Activated naive CD4-positive, alpha-beta T cell treated with anti-CD3 and anti-CD28 coated beads for 36 hours (primary cell): ENCODE measurements at regions of chr7 and their contacts with region 1.

Region 1: DNA sequence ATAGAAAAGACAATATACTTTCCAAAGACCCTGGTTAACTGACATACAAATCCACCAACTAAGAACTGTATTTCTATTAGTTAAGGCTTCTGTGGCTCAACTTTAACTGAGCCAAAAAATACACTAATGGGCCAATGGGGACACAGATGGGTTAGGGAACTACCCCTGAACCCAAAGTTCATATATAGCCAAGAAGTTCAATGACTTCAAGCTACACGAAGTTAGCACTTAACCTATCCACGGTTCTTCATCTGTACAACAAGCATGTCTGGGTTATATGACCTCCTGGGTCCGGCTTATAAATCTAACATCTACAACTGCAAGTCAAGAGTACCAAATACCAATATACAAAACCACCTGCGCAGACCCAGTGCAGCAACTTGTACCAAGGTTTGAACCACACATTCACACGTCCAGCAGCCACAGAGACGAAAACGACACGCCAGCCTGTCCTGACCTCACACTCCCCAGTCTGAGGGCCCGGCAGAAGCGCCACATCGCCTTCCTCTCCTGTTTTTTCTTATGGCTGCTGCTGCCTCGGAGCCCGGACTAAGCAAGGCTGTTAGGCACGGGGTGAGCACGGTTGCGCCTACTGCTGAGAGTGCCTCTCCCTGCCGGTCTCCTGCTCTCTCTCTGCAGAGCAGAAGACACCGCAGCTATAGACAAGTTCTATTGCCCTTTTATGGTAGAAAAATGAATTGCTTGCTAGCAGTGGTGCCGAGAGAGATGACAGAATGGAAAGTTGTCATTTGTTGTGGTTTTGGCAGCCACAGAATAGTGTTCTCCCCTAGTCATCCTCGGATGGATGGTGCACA is 86.3 kb downstream of the RNF216 start:
- DNase-seq: peak; percentile 93
- H3K4me3 Mint-ChIP-seq: peak overlapping the region; percentile 88
- H3K27ac Mint-ChIP-seq: peak overlapping the region; percentile 96
- H3K4me1 Mint-ChIP-seq: peaks cover 97% of the 10 kb centered on the region
- H3K27me3 Mint-ChIP-seq: no peaks in the 10 kb centered on the region

Region 2: DNA sequence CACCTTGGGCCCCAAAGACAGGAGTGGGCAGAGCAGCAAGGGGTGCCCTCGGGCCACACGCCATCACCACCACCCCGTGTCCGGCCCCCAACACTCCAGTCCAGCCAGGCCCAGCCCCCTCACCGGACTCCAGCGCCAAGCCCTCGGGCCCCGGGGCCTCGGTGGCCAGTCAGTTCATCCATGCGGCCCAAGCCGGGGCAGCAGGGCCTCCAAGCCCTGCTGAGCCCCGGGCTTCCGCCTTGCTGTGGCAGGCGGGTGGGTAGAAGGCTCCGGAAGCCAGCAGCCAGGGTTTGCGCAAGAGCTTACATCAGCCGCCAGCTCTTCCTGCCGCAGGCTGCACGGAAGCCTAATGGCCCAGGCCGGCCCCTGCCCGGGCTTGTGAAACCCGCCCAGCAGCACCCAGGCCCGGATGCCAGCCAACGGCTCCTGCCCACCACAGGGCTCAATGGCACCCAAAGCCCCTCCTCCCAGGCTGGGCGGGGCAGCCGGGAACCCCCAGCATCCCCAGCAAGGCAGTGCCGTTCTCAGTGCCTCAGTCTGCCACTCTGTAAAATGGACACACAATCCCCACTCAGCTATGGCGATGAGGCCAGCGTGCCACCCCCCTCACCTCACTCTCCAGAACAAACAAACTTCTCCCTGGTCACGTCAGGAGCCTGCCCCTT is 298.0 kb before region 1 on chr7:
- CTCF ChIA-PET with region 1: no interaction called
- intact Hi-C with region 1: loop called (anchors 2 kb)
- DNase-seq: peak; percentile 92
- H3K4me3 Mint-ChIP-seq: peak overlapping the region; percentile 79
- H3K27ac Mint-ChIP-seq: peak overlapping the region; percentile 92
- H3K4me1 Mint-ChIP-seq: peaks cover 32% of the 10 kb centered on the region
- H3K27me3 Mint-ChIP-seq: no peaks in the 10 kb centered on the region

Region 3: GRCh38 chr7:5636914-5637313 is 58.2 kb before region 1 on chr7:
- CTCF ChIA-PET with region 1: no interaction called
- intact Hi-C with region 1: loop called (anchors 2 kb)
- DNase-seq: no peak
- H3K4me3 Mint-ChIP-seq: no peak overlapping the region
- H3K27ac Mint-ChIP-seq: no peak overlapping the region
- H3K4me1 Mint-ChIP-seq: peaks cover 8% of the 10 kb centered on the region
- H3K27me3 Mint-ChIP-seq: no peaks in the 10 kb centered on the region

Region 4: DNA sequence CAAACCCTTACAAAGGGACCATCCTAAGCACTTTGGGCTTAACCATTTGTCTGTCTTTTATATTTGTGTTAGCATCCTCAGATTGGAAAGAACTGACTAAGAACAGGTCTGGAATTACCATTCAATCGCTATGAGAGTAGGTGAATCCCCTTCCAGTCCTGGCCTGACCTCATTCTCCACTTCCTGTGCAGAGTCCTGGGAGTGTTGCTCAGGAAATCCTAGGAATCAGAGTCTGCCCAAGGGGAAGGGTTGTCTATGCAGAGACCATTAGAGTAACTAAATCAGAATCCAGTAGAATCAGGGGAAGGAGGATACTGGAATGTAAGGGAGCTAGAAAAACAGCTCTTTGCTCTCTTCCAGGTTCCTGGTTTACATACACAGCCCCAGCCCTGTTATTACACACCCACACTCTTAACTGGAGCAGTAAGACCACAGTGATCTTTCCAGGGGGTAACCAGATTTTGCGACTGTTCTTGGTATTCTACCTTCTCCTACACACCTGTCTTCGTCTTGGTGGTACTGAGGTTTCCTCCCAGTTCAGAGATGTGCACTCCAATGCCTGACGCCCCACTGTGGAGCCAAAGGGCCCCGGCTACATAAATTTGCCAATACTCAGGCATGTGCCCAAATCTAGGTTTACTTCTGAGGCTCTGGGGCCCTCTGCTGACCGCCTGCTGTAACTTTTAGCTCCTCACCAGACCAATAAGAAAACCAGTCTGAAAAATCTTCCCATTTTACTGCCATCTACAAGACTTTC is 17.4 kb before region 1 on chr7:
- CTCF ChIA-PET with region 1: interaction called, 10 read pairs
- intact Hi-C with region 1: no loop called
- DNase-seq: peak; percentile 74
- H3K4me3 Mint-ChIP-seq: no peak overlapping the region
- H3K27ac Mint-ChIP-seq: peak overlapping the region; percentile 3
- H3K4me1 Mint-ChIP-seq: peaks cover 50% of the 10 kb centered on the region
- H3K27me3 Mint-ChIP-seq: no peaks in the 10 kb centered on the region

Region 5: GRCh38 chr7:5822742-5823503 is 127.8 kb after region 1 on chr7:
- CTCF ChIA-PET with region 1: interaction called, 11 read pairs
- intact Hi-C with region 1: loop called (anchors 1 kb)
- DNase-seq: peak; percentile 99
- H3K4me3 Mint-ChIP-seq: peak overlapping the region; percentile 77
- H3K27ac Mint-ChIP-seq: peak overlapping the region; percentile 77
- H3K4me1 Mint-ChIP-seq: peaks cover 26% of the 10 kb centered on the region
- H3K27me3 Mint-ChIP-seq: no peaks in the 10 kb centered on the region

Region 6: DNA sequence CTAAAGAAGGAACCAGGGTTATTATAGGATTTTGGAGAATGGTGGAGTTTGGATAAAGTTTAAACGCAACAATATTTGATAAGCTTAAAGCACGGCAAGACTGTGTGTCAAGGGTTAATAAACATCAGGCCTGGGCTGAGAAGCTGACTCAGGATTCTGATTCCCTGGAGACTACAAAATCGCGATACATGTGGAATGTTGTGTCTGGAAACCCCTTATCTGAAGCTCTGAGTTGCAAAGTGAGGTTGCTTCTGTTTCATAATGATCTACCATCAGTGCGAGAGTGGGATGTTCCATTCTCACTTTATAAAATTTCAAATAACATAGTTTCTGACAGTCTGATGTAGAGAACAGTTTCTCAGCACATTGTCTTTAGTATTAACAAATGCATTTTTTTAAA is 1495.0 kb after region 1 on chr7:
- CTCF ChIA-PET with region 1: no interaction called
- intact Hi-C with region 1: loop called (anchors 10 kb)
- DNase-seq: no peak
- H3K4me3 Mint-ChIP-seq: no peak overlapping the region
- H3K27ac Mint-ChIP-seq: no peak overlapping the region
- H3K4me1 Mint-ChIP-seq: peaks cover 46% of the 10 kb centered on the region
- H3K27me3 Mint-ChIP-seq: no peaks in the 10 kb centered on the region